Esophagus muscularis mucosa (tissue), 4 donors: ENCODE measurements at regions of chr2 and their contacts with region 1.

Region 1: GRCh38 chr2:237413777-237414661 is at the start of gene COL6A3:
- DNase-seq: no peak
- H3K4me3 ChIP-seq: peak within 1 kb of the TSS; percentile 53 to 61 (median 58)
- H3K27ac ChIP-seq: peak within 1 kb of the TSS; percentile 90 to 95 (median 92)
- H3K4me1 ChIP-seq: peaks cover 0 to 52% (median 44%) of the 10 kb centered on the region in 4 donors
- H3K27me3 ChIP-seq: no peaks in the 10 kb centered on the region
- CTCF ChIP-seq: no peak
- EP300 ChIP-seq: no peak
- POLR2A ChIP-seq: no peak
- total RNA-seq, gene COL6A3: 96.2 to 350 (median 192) TPM

Region 2: GRCh38 chr2:237092920-237093781 is 320.9 kb before region 1 on chr2:
- intact Hi-C with region 1: loop called (anchors 5 kb)
- DNase-seq: no peak
- H3K4me3 ChIP-seq: no peak overlapping the region
- H3K27ac ChIP-seq: peak overlapping the region; percentile 70 to 83 (median 77)
- H3K4me1 ChIP-seq: peaks cover 18 to 45% (median 41%) of the 10 kb centered on the region in 4 donors
- H3K27me3 ChIP-seq: no peaks in the 10 kb centered on the region
- CTCF ChIP-seq: peak; percentile 66 to 80 (median 66)
- EP300 ChIP-seq: no peak
- POLR2A ChIP-seq: no peak

Region 3: DNA sequence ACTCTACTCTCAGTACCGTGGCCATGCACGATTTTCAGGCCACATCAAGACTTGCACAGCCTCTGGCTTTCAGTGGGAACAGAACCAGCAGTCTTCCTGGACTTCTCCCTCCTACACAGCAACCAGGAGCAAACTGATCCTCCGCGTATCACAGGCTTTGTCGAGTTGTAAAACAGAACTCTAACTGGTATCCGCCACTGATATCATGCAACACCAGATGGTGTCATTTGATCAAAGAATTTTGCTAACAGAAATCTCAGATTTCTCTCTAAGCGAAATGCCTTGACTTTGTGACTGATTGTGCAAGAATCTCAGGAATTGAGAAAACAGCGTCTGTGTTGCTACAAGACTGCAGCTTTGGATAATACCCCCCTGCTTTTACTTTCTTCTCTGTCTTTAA is 242.6 kb before region 1 on chr2:
- intact Hi-C with region 1: loop called (anchors 2 kb)
- DNase-seq: peak; percentile 92
- H3K4me3 ChIP-seq: peak overlapping the region; percentile 6 to 25 (median 16)
- H3K27ac ChIP-seq: peak overlapping the region; percentile 57 to 73 (median 69)
- H3K4me1 ChIP-seq: peaks cover 4 to 22% (median 18%) of the 10 kb centered on the region in 4 donors
- H3K27me3 ChIP-seq: no peaks in the 10 kb centered on the region
- CTCF ChIP-seq: peak; percentile 42 to 50 (median 47)
- EP300 ChIP-seq: no peak
- POLR2A ChIP-seq: no peak

Region 4: DNA sequence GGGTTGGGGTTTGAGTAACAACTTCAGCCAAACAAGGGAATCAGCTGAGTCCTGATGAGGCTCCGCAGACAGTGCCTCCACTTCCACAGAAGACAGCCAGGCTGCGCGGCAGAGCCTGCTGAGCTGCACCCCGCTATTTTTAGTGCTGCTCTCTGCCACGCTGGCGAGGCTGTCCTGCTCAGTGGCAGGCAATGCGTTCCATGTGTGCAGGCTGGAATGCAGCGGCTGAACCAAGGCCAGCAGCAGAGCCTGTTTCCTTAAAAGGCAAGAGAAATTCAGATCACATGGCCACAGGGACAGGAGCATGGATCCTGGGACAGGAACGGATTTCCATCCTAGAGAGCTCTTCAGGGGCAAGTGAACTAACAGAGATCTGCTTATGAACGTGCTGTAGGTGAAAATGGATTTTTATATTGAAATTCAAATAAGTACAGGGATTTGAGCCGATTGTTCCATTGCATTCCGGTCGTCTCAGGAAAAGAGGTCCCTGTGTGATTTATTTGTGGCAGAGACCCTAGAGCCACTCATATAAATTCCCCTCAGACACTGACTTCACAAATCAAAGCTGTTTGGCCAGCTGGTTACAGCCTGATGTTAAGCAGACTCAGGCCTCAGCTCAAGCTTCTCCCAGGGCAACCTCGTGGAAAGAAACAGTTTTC is 98.7 kb before region 1 on chr2:
- intact Hi-C with region 1: loop called (anchors 2 kb)
- DNase-seq: no peak
- H3K4me3 ChIP-seq: peak overlapping the region in 1 of 4 donors; percentile 15
- H3K27ac ChIP-seq: peak overlapping the region; percentile 93 to 96 (median 95)
- H3K4me1 ChIP-seq: peaks cover 25 to 86% (median 80%) of the 10 kb centered on the region in 4 donors
- H3K27me3 ChIP-seq: no peaks in the 10 kb centered on the region
- CTCF ChIP-seq: peak; percentile 72 to 91 (median 86)
- EP300 ChIP-seq: no peak
- POLR2A ChIP-seq: no peak

Region 5: GRCh38 chr2:237558906-237559641 is 145.1 kb after region 1 on chr2:
- intact Hi-C with region 1: no loop called
- DNase-seq: peak; percentile 94
- H3K4me3 ChIP-seq: no peak overlapping the region
- H3K27ac ChIP-seq: no peak overlapping the region
- H3K4me1 ChIP-seq: peaks cover 9 to 30% (median 26%) of the 10 kb centered on the region in 4 donors
- H3K27me3 ChIP-seq: peaks cover 0 to 10% (median 0%) of the 10 kb centered on the region in 4 donors
- CTCF ChIP-seq: peak in 1 of 3 experiments; percentile 16
- EP300 ChIP-seq: no peak
- POLR2A ChIP-seq: no peak